H1 (cell line): ENCODE measurements at regions of chr16 and their contacts with region 1.

Region 1: DNA sequence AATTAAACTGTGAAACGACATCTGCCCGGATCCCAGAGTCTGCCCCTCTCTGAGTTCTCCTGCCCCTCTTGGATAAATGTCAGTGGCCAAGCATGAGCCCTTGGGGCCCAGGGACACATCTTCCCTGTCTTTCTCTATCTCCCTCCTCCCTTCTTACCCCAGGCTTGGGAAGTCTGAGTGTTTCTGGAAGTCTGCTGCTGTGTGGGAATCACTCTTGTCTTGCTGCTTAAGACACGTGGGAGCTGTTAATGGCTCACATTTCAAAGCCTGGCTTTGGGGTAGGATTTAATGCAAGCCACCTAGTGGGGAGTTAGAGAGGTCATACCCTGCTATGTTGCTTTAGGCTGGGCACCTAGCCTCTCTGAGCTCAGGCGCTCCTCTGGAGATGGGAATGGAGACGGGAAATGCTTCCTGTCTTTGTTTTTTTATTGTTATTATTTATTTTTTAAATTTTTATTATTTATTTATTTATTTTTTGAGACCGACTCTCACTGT is 218.5 kb upstream of the CIBAR2 start:
- DNase-seq: no peak
- H3K4me3 ChIP-seq: peak overlapping the region in 2 of 4 experiments; percentile 32 to 36; a peak in 3 of 8 replicates
- H3K27ac ChIP-seq: no peak overlapping the region
- H3K4me1 ChIP-seq: peaks cover 4 to 51% (median 42%) of the 10 kb centered on the region in 4 experiments
- H3K27me3 ChIP-seq: peaks cover 26 to 56% (median 47%) of the 10 kb centered on the region in 4 experiments
- CTCF ChIP-seq: peak in 2 of 3 experiments; percentile 59 to 74; a peak in 3 of 4 replicates
- EP300 ChIP-seq: no peak
- POLR2A ChIP-seq: no peak
- RAD21 ChIP-seq: peak; percentile 24 to 40

Region 2: GRCh38 chr16:85153656-85154091 is 177.1 kb before region 1 on chr16:
- CTCF ChIA-PET with region 1: no interaction called
- POLR2A ChIA-PET with region 1: no interaction called
- DNase-seq: no peak
- H3K4me3 ChIP-seq: no peak overlapping the region
- H3K27ac ChIP-seq: no peak overlapping the region
- H3K4me1 ChIP-seq: peaks cover 0 to 12% (median 6%) of the 10 kb centered on the region in 4 experiments; a peak in 6 of 7 replicates
- H3K27me3 ChIP-seq: no peaks in the 10 kb centered on the region
- CTCF ChIP-seq: no peak
- EP300 ChIP-seq: no peak
- POLR2A ChIP-seq: no peak
- RAD21 ChIP-seq: no peak

Region 3: GRCh38 chr16:85296859-85297660 is 33.7 kb before region 1 on chr16:
- CTCF ChIA-PET with region 1: interaction called, 12 read pairs
- POLR2A ChIA-PET with region 1: no interaction called
- DNase-seq: peak in 1 of 2 experiments; percentile 87
- H3K4me3 ChIP-seq: no peak overlapping the region
- H3K27ac ChIP-seq: no peak overlapping the region
- H3K4me1 ChIP-seq: no peaks in the 10 kb centered on the region
- H3K27me3 ChIP-seq: no peaks in the 10 kb centered on the region; a peak in 1 of 7 replicates
- CTCF ChIP-seq: peak; percentile 91 to 93 (median 91)
- EP300 ChIP-seq: no peak
- POLR2A ChIP-seq: no peak
- RAD21 ChIP-seq: peak; percentile 49 to 68; a peak in 3 of 4 replicates

Region 4: GRCh38 chr16:85313526-85314301 is 17.0 kb before region 1 on chr16:
- CTCF ChIA-PET with region 1: interaction called, 21 read pairs
- POLR2A ChIA-PET with region 1: interaction called, 7 read pairs
- DNase-seq: no peak
- H3K4me3 ChIP-seq: no peak overlapping the region
- H3K27ac ChIP-seq: no peak overlapping the region
- H3K4me1 ChIP-seq: peaks cover 7 to 56% (median 40%) of the 10 kb centered on the region in 4 experiments
- H3K27me3 ChIP-seq: 0 out of 7 replicates have a peak, but pooled peaks cover 0 to 4% (median 0%) of the 10 kb centered on the region in 4 experiments
- CTCF ChIP-seq: no peak
- EP300 ChIP-seq: no peak
- POLR2A ChIP-seq: no peak
- RAD21 ChIP-seq: no peak

Region 5: GRCh38 chr16:85341972-85342695 is 11.4 kb after region 1 on chr16:
- CTCF ChIA-PET with region 1: interaction called, 15 read pairs
- POLR2A ChIA-PET with region 1: interaction called, 4 read pairs
- DNase-seq: no peak
- H3K4me3 ChIP-seq: no peak overlapping the region
- H3K27ac ChIP-seq: no peak overlapping the region
- H3K4me1 ChIP-seq: peaks cover 0 to 5% (median 0%) of the 10 kb centered on the region in 4 experiments; a peak in 1 of 7 replicates
- H3K27me3 ChIP-seq: peaks cover 0 to 3% (median under 1%) of the 10 kb centered on the region in 4 experiments; a peak in 2 of 7 replicates
- CTCF ChIP-seq: no peak
- EP300 ChIP-seq: no peak
- POLR2A ChIP-seq: no peak
- RAD21 ChIP-seq: no peak

Region 6: GRCh38 chr16:85486256-85486915 is 155.6 kb after region 1 on chr16:
- CTCF ChIA-PET with region 1: no interaction called
- POLR2A ChIA-PET with region 1: no interaction called
- DNase-seq: no peak
- H3K4me3 ChIP-seq: no peak overlapping the region
- H3K27ac ChIP-seq: no peak overlapping the region
- H3K4me1 ChIP-seq: peaks cover 0 to 4% (median 3%) of the 10 kb centered on the region in 4 experiments; a peak in 3 of 7 replicates
- H3K27me3 ChIP-seq: no peaks in the 10 kb centered on the region
- CTCF ChIP-seq: no peak
- EP300 ChIP-seq: no peak
- POLR2A ChIP-seq: no peak
- RAD21 ChIP-seq: no peak